SK-N-SH (cell line): ENCODE measurements at regions of chr2 and their contacts with region 1.

Region 1: GRCh38 chr2:219171231-219171651 is 1.4 kb upstream of the SLC23A3 start:
- DNase-seq: peak; percentile 73
- H3K4me3 ChIP-seq: no peak overlapping the region; a peak in 1 of 4 replicates
- H3K27ac ChIP-seq: peak overlapping the region; percentile 4 to 5; a peak in 2 of 4 replicates
- H3K4me1 ChIP-seq: peaks cover 0 to 8% of the 10 kb centered on the region in 2 experiments; a peak in 2 of 4 replicates
- H3K27me3 ChIP-seq: no peaks in the 10 kb centered on the region
- CTCF ChIP-seq: peak; percentile 81
- EP300 ChIP-seq: no peak
- RAD21 ChIP-seq: peak; percentile 62

Region 2: DNA sequence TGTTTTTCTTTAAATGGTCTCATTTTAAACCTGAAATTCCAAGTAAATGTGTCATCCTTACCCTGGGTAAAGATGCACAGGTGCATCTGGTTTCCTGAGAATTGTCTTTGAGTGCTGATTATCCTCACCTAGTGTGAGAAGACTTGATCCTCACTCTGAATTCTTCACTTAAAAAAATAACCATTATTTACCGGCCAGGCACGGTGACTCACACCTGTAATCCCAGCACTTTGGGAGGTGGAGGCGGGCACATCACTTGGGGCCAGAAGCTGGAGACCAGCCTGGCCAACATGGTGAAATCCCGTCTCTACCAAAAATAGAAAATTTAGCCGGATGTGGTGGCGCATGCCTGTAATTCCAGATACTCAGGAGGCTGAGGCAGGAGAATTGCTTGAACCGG is 321.5 kb before region 1 on chr2:
- CTCF ChIA-PET with region 1: no interaction called
- POLR2A ChIA-PET with region 1: no interaction called
- DNase-seq: no peak
- H3K4me3 ChIP-seq: no peak overlapping the region
- H3K27ac ChIP-seq: no peak overlapping the region
- H3K4me1 ChIP-seq: peaks cover 3 to 10% of the 10 kb centered on the region in 2 experiments; a peak in 1 of 4 replicates
- H3K27me3 ChIP-seq: no peaks in the 10 kb centered on the region
- CTCF ChIP-seq: no peak
- EP300 ChIP-seq: no peak
- RAD21 ChIP-seq: no peak

Region 3: GRCh38 chr2:219186754-219187456 is 15.7 kb after region 1 on chr2:
- CTCF ChIA-PET with region 1: interaction called, 14 read pairs
- POLR2A ChIA-PET with region 1: interaction called, 3 read pairs
- DNase-seq: no peak
- H3K4me3 ChIP-seq: no peak overlapping the region
- H3K27ac ChIP-seq: no peak overlapping the region
- H3K4me1 ChIP-seq: no peaks in the 10 kb centered on the region
- H3K27me3 ChIP-seq: no peaks in the 10 kb centered on the region
- CTCF ChIP-seq: no peak
- EP300 ChIP-seq: no peak
- RAD21 ChIP-seq: no peak

Region 4: GRCh38 chr2:219206442-219207253 is 35.4 kb after region 1 on chr2 and contains the start of gene ZFAND2B:
- CTCF ChIA-PET with region 1: interaction called, 22 read pairs
- POLR2A ChIA-PET with region 1: interaction called, 3 read pairs
- DNase-seq: peak; percentile 99
- H3K4me3 ChIP-seq: peak within 1 kb of the TSS; percentile 69
- H3K27ac ChIP-seq: peak within 1 kb of the TSS; percentile 67 to 93; a peak in 3 of 4 replicates
- H3K4me1 ChIP-seq: peaks cover 13 to 20% of the 10 kb centered on the region in 2 experiments; a peak in 3 of 4 replicates
- H3K27me3 ChIP-seq: no peaks in the 10 kb centered on the region
- CTCF ChIP-seq: no peak
- EP300 ChIP-seq: no peak
- RAD21 ChIP-seq: 0 out of 2 replicates have a peak, but pooled peaks have one; percentile 2
- polyA plus RNA-seq, gene ZFAND2B: 39.9 and 46.9 TPM in 2 replicates